Aorta (tissue), 5 donors: ENCODE measurements at regions of chr22 and their contacts with region 1.

Region 1: DNA sequence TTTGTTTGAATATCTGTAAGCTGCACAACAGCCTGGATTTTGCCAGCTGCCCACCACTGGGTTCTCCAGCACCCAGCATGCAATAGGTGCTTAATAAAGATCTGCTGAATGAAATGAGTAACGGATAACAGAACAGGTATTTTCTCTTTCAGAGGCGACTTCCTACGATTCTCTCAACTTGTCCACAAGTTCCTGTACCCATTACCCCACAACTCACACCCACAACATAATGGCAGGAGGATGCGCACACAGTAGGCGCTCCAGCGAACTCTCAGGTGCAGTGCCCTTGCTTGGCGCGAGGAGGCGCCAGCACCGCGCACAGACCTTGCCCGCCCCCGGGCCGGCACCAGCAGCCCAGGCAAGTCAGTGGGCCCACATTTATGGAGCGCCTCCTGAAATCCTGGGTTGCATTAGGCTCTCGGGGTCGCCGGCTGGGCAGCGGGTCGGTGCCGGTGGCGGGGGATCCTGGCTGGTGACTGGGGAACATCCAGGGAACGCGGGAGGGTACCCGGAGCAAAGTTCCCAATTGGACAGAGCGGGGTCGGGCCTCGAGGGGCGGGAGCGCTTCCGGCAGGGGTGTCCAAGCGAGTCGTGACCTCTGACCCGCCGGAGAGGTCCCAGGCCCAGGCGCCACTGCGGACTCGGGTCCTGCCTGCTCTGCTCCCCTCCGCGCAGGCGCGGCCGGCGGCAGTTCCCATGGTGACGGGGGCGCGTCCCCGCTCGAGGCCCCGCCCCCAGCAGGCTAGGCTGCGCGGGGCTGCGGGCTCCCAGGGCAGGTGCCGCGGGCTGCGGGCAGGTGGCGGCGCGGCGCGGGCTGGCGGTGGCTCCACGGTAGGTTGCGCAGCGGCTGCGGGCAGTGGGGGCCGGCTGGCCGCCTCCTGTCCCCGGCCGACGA is at the start of gene KIAA1671:
- DNase-seq: peak; percentile 88 to 94
- ATAC-seq: peak; percentile 94
- H3K4me3 ChIP-seq: peak within 1 kb of the TSS; percentile 58 to 65
- H3K27ac ChIP-seq: no peak within 1 kb of the TSS
- H3K4me1 ChIP-seq: no peaks in the 10 kb centered on the region
- H3K27me3 ChIP-seq: no peaks in the 10 kb centered on the region
- total RNA-seq, gene KIAA1671: 57.0 to 93.3 TPM

Region 2: GRCh38 chr22:24985826-24986214 is 33.6 kb after region 1 on chr22:
- intact Hi-C with region 1: loop called in 1 of 2 experiments (anchors 5 kb)
- DNase-seq: peak in 1 of 2 donors; percentile 72
- ATAC-seq: peak; percentile 65
- H3K4me3 ChIP-seq: no peak overlapping the region
- H3K27ac ChIP-seq: peak overlapping the region in 1 of 2 donors; percentile 34
- H3K4me1 ChIP-seq: no peaks in the 10 kb centered on the region
- H3K27me3 ChIP-seq: no peaks in the 10 kb centered on the region

Region 3: GRCh38 chr22:25027959-25028840 is 76.0 kb after region 1 on chr22:
- intact Hi-C with region 1: loop called in 1 of 2 experiments (anchors 5 kb)
- DNase-seq: no peak
- ATAC-seq: peak; percentile 58
- H3K4me3 ChIP-seq: no peak overlapping the region
- H3K27ac ChIP-seq: no peak overlapping the region
- H3K4me1 ChIP-seq: no peaks in the 10 kb centered on the region
- H3K27me3 ChIP-seq: no peaks in the 10 kb centered on the region